ENCODE measurements at regions of chr6 and their contacts with region 1.

Region 1: DNA sequence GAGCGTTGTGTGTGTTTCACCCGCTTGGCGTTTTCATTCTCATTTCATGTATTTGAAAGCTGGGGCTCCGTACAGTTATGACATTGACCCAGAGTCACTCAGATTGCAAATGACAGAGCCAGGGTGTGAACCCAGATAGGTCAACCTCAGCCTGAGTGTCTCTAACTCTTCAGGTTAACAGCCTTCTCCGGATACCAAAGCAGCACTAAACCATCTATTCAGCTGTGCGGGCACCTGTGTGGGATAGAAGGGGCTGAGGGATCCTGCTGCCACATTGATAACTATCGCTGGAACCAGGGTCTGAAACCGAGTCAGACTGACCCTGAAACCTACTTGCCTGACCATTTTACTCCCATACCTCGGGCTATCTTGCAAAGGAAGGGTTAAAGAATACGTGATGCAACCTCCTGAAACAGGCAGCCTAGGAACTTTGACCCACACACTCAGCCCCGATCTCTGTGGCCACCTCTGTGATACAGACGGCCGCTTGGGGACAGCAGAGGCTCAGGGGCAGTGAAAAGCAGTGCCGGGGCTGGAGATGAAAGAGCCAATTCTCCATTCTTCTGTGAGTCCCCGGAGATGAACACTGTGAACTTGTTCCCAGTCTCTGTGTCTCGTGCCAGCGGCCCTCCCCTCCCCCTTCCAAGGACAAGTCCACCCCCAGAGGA is 233.5 kb upstream of the QKI start:
- DNase-seq: peak; percentile 64 to 87
- ATAC-seq: peak; percentile 89 to 96
- H3K4me3 ChIP-seq: peak overlapping the region; percentile 17 to 54 (median 42)
- H3K27ac ChIP-seq: peak overlapping the region; percentile 50 to 69 (median 63)
- H3K4me1 ChIP-seq: peaks cover 17 to 31% of the 10 kb centered on the region in 2 donors
- H3K27me3 ChIP-seq: no peaks in the 10 kb centered on the region
- CTCF ChIP-seq: peak; percentile 81 to 97 (median 87)
- POLR2A ChIP-seq: no peak

Region 2: DNA sequence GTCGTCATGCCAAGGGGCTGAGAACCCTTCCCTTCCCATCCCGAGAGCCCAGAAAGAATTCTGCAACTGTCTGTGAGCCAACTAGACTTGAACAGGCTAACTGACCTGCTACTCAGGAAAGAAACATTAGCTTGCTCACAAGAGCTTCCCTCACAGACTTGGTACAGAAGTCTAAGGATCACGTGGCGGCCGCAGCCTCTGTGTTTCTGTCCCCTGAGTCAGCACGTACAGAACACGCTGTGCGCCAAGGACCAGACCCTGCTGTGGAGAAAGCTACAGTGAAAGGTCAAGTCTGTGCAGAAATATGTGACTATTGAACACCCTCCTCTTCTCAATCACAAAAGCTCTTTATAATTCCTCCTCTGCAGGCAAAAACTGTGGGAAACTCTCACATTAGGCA is 82.2 kb after region 1 on chr6:
- in situ Hi-C with region 1: no loop called
- intact Hi-C with region 1: no loop called
- DNase-seq: peak; percentile 67
- ATAC-seq: peak; percentile 79 to 93
- H3K4me3 ChIP-seq: peak overlapping the region in 1 of 4 donors; percentile 14
- H3K27ac ChIP-seq: peak overlapping the region; percentile 9 to 76 (median 52)
- H3K4me1 ChIP-seq: peaks cover 23 to 27% of the 10 kb centered on the region in 2 donors
- H3K27me3 ChIP-seq: no peaks in the 10 kb centered on the region
- CTCF ChIP-seq: no peak
- POLR2A ChIP-seq: no peak

Region 3: GRCh38 chr6:163347021-163347446 is 166.0 kb after region 1 on chr6:
- in situ Hi-C with region 1: no loop called
- intact Hi-C with region 1: loop called (anchors 5 kb)
- DNase-seq: peak in 1 of 2 donors; percentile 69
- ATAC-seq: peak; percentile 55 to 69
- H3K4me3 ChIP-seq: peak overlapping the region; percentile 38 to 45 (median 44)
- H3K27ac ChIP-seq: peak overlapping the region; percentile 73 to 93 (median 86)
- H3K4me1 ChIP-seq: peaks cover 16 to 26% of the 10 kb centered on the region in 2 donors
- H3K27me3 ChIP-seq: no peaks in the 10 kb centered on the region
- CTCF ChIP-seq: no peak
- POLR2A ChIP-seq: peak in 1 of 2 donors; percentile 48

Region 4: DNA sequence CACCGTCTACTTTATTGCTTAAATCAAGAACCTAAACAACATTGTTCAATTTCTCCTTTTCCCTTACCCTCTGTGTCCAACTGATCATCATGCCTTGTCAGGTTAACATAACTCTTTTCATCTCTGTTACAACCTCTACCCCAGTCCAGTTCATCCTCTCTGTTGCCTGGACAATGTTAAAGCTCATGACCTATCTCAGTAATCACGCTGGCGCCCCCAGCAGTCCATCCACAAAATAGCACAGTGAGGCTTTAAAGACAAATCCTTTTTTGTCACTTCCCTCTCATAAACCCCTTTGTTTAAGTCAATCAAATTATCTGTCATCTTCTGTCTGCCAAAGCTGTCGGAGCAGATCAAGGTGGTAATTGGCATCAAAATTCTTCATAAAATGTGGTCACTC is 373.7 kb after region 1 on chr6:
- in situ Hi-C with region 1: loop called in 1 of 4 experiments (anchors 25 kb)
- intact Hi-C with region 1: no loop called
- DNase-seq: peak in 1 of 2 donors; percentile 55
- ATAC-seq: peak; percentile 27 to 62
- H3K4me3 ChIP-seq: no peak overlapping the region
- H3K27ac ChIP-seq: peak overlapping the region; percentile 32 to 79 (median 54)
- H3K4me1 ChIP-seq: peaks cover 39 to 48% of the 10 kb centered on the region in 2 donors
- H3K27me3 ChIP-seq: no peaks in the 10 kb centered on the region
- CTCF ChIP-seq: peak in 4 of 5 experiments; percentile 17 to 57 (median 40)
- POLR2A ChIP-seq: no peak

Region 5: DNA sequence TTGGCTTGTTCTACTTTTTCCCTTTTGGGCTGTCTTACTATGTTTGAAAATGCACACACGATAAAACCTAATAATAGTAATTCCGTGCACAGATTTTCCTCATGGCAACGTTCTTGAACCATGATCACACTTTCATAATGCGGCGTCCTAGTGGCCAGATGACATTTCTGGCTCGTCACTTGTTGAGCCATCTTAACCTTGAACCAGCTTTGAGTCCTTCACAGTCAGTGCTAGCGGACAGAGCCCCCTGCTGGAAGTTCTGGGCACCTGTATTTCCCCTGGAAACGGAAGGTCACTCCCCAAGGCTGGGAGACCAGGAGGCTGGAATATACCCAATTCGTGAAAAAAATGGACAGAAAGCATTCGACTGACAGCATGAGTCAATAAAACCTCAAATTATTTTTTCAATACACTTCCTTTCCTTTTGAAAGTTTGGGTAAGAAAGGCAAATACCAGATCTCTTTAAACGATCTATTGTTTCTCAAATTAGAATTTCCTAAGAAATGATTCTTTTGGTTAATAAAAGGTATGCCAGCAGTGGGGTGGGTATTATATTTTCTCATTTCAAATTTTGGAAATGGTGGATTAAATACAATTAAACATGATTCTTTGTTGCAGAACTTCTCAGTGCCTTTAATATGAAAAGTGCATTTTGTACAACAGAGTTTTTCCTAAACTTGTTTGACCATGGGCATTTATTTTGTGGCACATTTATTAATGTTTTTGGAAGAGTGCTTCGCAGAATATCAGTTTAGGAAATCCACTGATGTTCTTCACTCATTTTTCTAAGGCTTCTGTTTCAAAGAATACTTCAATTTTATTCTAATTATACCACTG is 775.8 kb after region 1 on chr6:
- in situ Hi-C with region 1: loop called (anchors 10 kb)
- intact Hi-C with region 1: loop called (anchors 5 kb)
- DNase-seq: peak; percentile 78 to 91
- ATAC-seq: peak; percentile 88 to 96
- H3K4me3 ChIP-seq: peak overlapping the region in 1 of 4 donors; percentile 23
- H3K27ac ChIP-seq: peak overlapping the region; percentile 78 to 99 (median 92)
- H3K4me1 ChIP-seq: peaks cover 38 to 52% of the 10 kb centered on the region in 2 donors
- H3K27me3 ChIP-seq: no peaks in the 10 kb centered on the region
- CTCF ChIP-seq: peak; percentile 94 to 96 (median 95)
- POLR2A ChIP-seq: no peak

Region 6: GRCh38 chr6:164927288-164928056 is 1746.5 kb after region 1 on chr6:
- in situ Hi-C with region 1: no loop called
- intact Hi-C with region 1: loop called (anchors 2 kb)
- DNase-seq: peak; percentile 37 to 61
- ATAC-seq: peak; percentile 88 to 97
- H3K4me3 ChIP-seq: peak overlapping the region; percentile 38 to 69 (median 51)
- H3K27ac ChIP-seq: peak overlapping the region in 3 of 4 donors; percentile 27 to 54 (median 47)
- H3K4me1 ChIP-seq: peaks cover 8 to 21% of the 10 kb centered on the region in 2 donors
- H3K27me3 ChIP-seq: no peaks in the 10 kb centered on the region
- CTCF ChIP-seq: peak; percentile 88 to 99 (median 93)
- POLR2A ChIP-seq: no peak

Measured in gastrocnemius medialis (tissue), 4 donors.